Heart left ventricle (tissue), 16 donors: ENCODE measurements at regions of chr7 and their contacts with region 1.

Region 1: GRCh38 chr7:157568770-157569584 is 232.2 kb downstream of the DNAJB6 start:
- DNase-seq: peak; percentile 55 to 77 (median 68)
- ATAC-seq: peak; percentile 56 to 92 (median 82)
- H3K4me3 ChIP-seq: peak overlapping the region; percentile 26 to 81 (median 64)
- H3K27ac ChIP-seq: peak overlapping the region in 10 of 12 donors; percentile 4 to 77 (median 54)
- H3K4me1 ChIP-seq: peaks cover 0 to 21% (median 7%) of the 10 kb centered on the region in 12 donors
- H3K27me3 ChIP-seq: peaks cover 0 to 5% (median 0%) of the 10 kb centered on the region in 9 donors
- CTCF ChIP-seq: no peak
- POLR2A ChIP-seq: no peak

Region 2: GRCh38 chr7:157502701-157503111 is 66.3 kb before region 1 on chr7:
- intact Hi-C with region 1: loop called in 1 of 10 experiments (anchors 2 kb)
- DNase-seq: peak in 3 of 5 donors; percentile 27 to 56 (median 53)
- ATAC-seq: peak in 3 of 4 donors; percentile 45 to 96 (median 72)
- H3K4me3 ChIP-seq: peak overlapping the region in 8 of 12 donors; percentile 22 to 35 (median 32)
- H3K27ac ChIP-seq: peak overlapping the region in 9 of 12 donors; percentile 29 to 68 (median 53)
- H3K4me1 ChIP-seq: peaks cover 0 to 11% (median 0%) of the 10 kb centered on the region in 12 donors
- H3K27me3 ChIP-seq: peaks cover 0 to 17% (median 0%) of the 10 kb centered on the region in 9 donors
- CTCF ChIP-seq: no peak
- POLR2A ChIP-seq: no peak